Heart left ventricle (tissue), 16 donors: ENCODE measurements at regions of chr13 and their contacts with region 1.

Region 1: GRCh38 chr13:35252536-35253205 is 223.8 kb downstream of the MAB21L1 start:
- DNase-seq: no peak
- ATAC-seq: no peak
- H3K4me3 ChIP-seq: no peak overlapping the region
- H3K27ac ChIP-seq: no peak overlapping the region
- H3K4me1 ChIP-seq: no peaks in the 10 kb centered on the region
- H3K27me3 ChIP-seq: no peaks in the 10 kb centered on the region
- CTCF ChIP-seq: no peak
- POLR2A ChIP-seq: no peak

Region 2: GRCh38 chr13:34967851-34968562 is 284.7 kb before region 1 on chr13:
- intact Hi-C with region 1: no loop called
- DNase-seq: no peak
- ATAC-seq: peak in 2 of 4 donors; percentile 10 to 38
- H3K4me3 ChIP-seq: no peak overlapping the region
- H3K27ac ChIP-seq: no peak overlapping the region
- H3K4me1 ChIP-seq: peaks cover 0 to 36% (median 0%) of the 10 kb centered on the region in 12 donors
- H3K27me3 ChIP-seq: no peaks in the 10 kb centered on the region
- CTCF ChIP-seq: no peak
- POLR2A ChIP-seq: no peak

Region 3: GRCh38 chr13:35139591-35139990 is 113.1 kb before region 1 on chr13:
- intact Hi-C with region 1: no loop called
- DNase-seq: no peak
- ATAC-seq: peak in 1 of 4 donors; percentile 26
- H3K4me3 ChIP-seq: no peak overlapping the region
- H3K27ac ChIP-seq: no peak overlapping the region
- H3K4me1 ChIP-seq: peaks cover 0 to 23% (median 0%) of the 10 kb centered on the region in 12 donors
- H3K27me3 ChIP-seq: no peaks in the 10 kb centered on the region
- CTCF ChIP-seq: no peak
- POLR2A ChIP-seq: no peak

Region 4: GRCh38 chr13:35309706-35310105 is 57.0 kb after region 1 on chr13:
- intact Hi-C with region 1: loop called in 1 of 10 experiments (anchors 10 kb)
- DNase-seq: no peak
- ATAC-seq: no peak
- H3K4me3 ChIP-seq: no peak overlapping the region
- H3K27ac ChIP-seq: no peak overlapping the region
- H3K4me1 ChIP-seq: no peaks in the 10 kb centered on the region
- H3K27me3 ChIP-seq: no peaks in the 10 kb centered on the region
- CTCF ChIP-seq: no peak
- POLR2A ChIP-seq: no peak

Region 5: DNA sequence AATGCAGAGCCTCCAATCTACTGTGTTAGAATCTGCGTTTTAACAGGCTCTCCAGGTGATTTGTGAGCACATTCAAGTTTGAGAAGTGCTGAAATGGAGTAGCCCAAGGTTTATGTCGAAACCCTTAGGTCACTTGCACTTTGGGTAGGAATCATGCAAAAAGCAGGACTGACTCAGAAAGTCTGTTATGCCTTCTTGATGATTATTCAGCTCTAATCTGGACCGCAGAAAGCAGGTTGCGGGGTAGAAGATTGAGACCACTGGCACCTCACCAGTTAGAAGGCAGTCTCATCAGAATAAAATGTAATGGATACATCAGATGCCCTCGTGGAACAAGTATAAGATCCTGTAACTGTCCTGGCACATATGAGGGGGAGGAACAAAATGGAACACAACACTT is 552.2 kb after region 1 on chr13:
- intact Hi-C with region 1: no loop called
- DNase-seq: no peak
- ATAC-seq: no peak
- H3K4me3 ChIP-seq: no peak overlapping the region
- H3K27ac ChIP-seq: no peak overlapping the region
- H3K4me1 ChIP-seq: no peaks in the 10 kb centered on the region
- H3K27me3 ChIP-seq: no peaks in the 10 kb centered on the region
- CTCF ChIP-seq: no peak
- POLR2A ChIP-seq: no peak